ENCODE measurements at regions of chr17 and their contacts with region 1.

Region 1: DNA sequence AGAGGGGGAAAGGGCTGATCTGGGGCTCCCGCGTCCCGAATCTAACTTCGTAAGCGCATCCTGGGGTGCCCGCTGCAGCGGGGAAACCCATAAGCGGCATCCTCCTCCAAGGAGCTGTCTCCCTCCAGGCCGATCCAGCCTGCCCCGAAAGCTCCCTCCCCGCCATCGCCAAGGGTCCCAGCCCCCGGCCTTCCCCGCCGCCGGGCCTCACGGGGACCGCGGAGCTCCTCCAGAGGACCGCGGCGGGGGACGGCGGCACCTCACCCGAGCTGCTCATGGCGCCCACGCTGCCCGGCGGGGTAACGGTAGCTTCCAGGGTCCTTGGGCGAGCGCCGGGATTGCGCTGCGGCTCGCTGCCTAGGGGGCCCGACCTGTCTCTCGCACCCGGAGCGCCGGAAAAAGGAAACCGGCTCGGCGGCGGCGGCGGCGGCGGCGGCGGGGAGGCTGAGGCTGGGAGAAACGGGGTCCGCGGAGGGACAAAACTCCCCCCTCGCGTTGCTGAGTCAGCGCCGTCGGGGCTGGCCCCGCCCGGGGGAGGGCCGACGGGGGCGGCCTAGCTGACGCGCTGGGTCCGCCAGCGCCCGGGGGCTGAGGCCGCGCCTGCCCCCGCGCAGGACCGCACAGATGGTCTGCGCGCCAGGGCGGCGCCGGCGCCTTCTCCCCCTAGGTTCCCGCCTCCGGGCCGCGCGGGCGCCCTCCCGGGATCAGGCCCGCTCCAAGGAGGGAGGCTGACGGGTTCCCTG is at the start of gene BLMH:
- DNase-seq: peak; percentile 88
- H3K4me3 ChIP-seq: peak within 1 kb of the TSS; percentile 91 to 95 (median 94)
- H3K27ac ChIP-seq: peak within 1 kb of the TSS; percentile 71 to 83 (median 82)
- H3K4me1 ChIP-seq: peaks cover 0 to 16% (median 12%) of the 10 kb centered on the region in 4 donors
- H3K27me3 ChIP-seq: no peaks in the 10 kb centered on the region
- CTCF ChIP-seq: no peak
- EP300 ChIP-seq: no peak
- POLR2A ChIP-seq: no peak
- total RNA-seq, gene BLMH: 19.3 to 33.8 (median 27.2) TPM

Region 2: GRCh38 chr17:30378824-30379302 is 87.1 kb after region 1 on chr17 and contains the start of gene CPD:
- intact Hi-C with region 1: loop called (anchors 2 kb)
- DNase-seq: peak; percentile 98
- H3K4me3 ChIP-seq: peak within 1 kb of the TSS; percentile 82 to 98 (median 90)
- H3K27ac ChIP-seq: peak within 1 kb of the TSS; percentile 89 to 94 (median 94)
- H3K4me1 ChIP-seq: peaks cover 0 to 41% (median 30%) of the 10 kb centered on the region in 4 donors
- H3K27me3 ChIP-seq: no peaks in the 10 kb centered on the region
- CTCF ChIP-seq: no peak
- EP300 ChIP-seq: no peak
- POLR2A ChIP-seq: peak; percentile 77 to 83
- total RNA-seq, gene CPD: 33.7 to 99.5 (median 42.2) TPM

Measured in sigmoid colon (tissue), 7 donors.